Ovary (tissue), 10 donors: ENCODE measurements at regions of chr12 and their contacts with region 1.

Region 1: GRCh38 chr12:81212996-81213696 is 135.3 kb downstream of the ACSS3 start:
- DNase-seq: no peak
- H3K4me3 ChIP-seq: no peak overlapping the region
- H3K27ac ChIP-seq: no peak overlapping the region
- H3K4me1 ChIP-seq: peaks cover 10% of the 10 kb centered on the region
- H3K27me3 ChIP-seq: no peaks in the 10 kb centered on the region
- CTCF ChIP-seq: no peak
- EP300 ChIP-seq: no peak
- POLR2A ChIP-seq: no peak

Region 2: DNA sequence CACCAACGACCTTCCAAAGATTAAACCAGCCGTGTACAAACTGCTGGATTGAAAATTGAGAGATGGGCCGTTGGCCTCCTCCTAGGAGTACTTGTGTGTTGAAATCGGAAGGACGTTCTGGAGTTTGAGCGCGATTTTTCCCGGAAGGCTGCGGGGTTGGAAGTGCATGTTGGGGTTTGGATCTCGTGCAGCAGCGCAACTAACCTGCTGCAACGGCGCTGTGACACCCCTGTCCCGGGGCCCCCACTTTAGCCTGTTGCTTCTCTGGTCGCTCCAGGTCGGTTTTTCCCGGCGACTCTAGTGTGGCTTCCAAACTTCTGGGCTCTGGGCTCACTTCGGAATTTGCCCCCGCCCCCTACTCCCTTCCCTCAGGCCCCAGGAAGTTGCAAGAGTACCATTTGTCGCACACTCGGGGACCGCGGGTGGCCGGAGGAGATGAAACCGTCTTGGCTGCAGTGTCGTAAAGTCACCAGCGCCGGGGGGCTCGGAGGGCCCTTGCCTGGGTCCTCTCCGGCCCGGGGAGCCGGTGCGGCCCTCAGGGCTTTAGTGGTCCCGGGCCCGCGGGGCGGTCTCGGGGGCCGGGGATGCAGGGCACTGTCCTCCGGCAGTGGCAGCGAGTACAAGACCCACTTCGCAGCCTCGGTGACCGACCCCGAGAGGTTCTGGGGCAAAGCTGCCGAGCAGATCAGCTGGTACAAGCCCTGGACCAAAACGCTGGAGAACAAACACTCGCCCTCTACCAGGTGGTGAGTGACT is 135.3 kb before region 1 on chr12 and contains the start of gene ACSS3:
- intact Hi-C with region 1: loop called in 1 of 4 experiments (anchors 10 kb)
- DNase-seq: peak; percentile 64 to 75 (median 70)
- H3K4me3 ChIP-seq: peak within 1 kb of the TSS; percentile 87
- H3K27ac ChIP-seq: peak within 1 kb of the TSS; percentile 87 to 89
- H3K4me1 ChIP-seq: peaks cover 14% of the 10 kb centered on the region
- H3K27me3 ChIP-seq: no peaks in the 10 kb centered on the region
- CTCF ChIP-seq: no peak
- EP300 ChIP-seq: no peak
- POLR2A ChIP-seq: no peak
- total RNA-seq, gene ACSS3: 29.9 to 67.0 (median 43.7) TPM